CD4-positive, alpha-beta T cell (primary cell): ENCODE measurements at regions of chr10 and their contacts with region 1.

Region 1: GRCh38 chr10:12594448-12594944 is 245.1 kb downstream of the CAMK1D start:
- DNase-seq: peak in 12 of 14 experiments; percentile 7 to 82 (median 30)
- ATAC-seq: peak; percentile 80
- H3K4me3 ChIP-seq: no peak overlapping the region
- H3K4me3 Mint-ChIP-seq: peak overlapping the region; percentile 75
- H3K27ac ChIP-seq: peak overlapping the region; percentile 32
- H3K27ac Mint-ChIP-seq: peak overlapping the region; percentile 96
- H3K4me1 ChIP-seq: peaks cover 53% of the 10 kb centered on the region
- H3K4me1 Mint-ChIP-seq: peaks cover 96% of the 10 kb centered on the region
- H3K27me3 ChIP-seq: no peaks in the 10 kb centered on the region
- H3K27me3 Mint-ChIP-seq: no peaks in the 10 kb centered on the region
- CTCF ChIP-seq: no peak

Region 2: DNA sequence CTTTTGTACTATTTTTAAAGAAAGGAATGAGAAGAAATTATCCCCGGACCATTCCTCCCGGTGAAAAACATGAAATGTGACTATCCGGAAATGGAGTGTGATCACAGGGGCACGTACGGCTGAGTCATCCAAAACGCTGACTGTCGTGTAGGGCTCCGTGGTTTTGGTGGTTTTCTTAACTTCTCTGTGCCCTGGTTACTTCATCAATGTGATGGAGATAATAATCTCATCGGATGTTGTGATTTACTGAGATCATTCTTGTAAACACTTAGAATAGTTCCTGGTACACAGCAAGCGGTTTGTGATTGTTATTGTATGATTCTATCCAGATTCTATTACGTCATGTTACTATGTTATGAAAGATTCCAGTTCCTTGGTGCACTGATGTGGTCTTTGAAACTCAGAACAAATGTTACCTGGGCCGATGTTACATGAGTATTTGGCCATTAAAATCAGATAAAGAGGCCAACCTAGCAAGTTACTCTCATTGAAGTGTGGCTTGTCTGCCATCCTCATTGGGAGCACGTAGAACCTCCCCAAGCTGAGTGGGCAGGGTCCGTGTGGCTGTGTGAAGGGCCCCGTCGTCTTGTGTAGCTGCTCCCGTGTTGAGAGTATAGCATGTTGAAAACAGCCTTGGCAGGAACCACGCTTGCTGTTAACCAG is 145.6 kb before region 1 on chr10:
- CTCF ChIA-PET with region 1: no interaction called
- POLR2A ChIA-PET with region 1: no interaction called
- intact Hi-C with region 1: loop called in 1 of 2 experiments (anchors 5 kb)
- DNase-seq: peak; percentile 53 to 96 (median 68)
- ATAC-seq: peak; percentile 87
- H3K4me3 ChIP-seq: peak overlapping the region; percentile 21
- H3K4me3 Mint-ChIP-seq: peak overlapping the region; percentile 72
- H3K27ac ChIP-seq: peak overlapping the region; percentile 58 to 72
- H3K27ac Mint-ChIP-seq: peak overlapping the region; percentile 88
- H3K4me1 ChIP-seq: peaks cover 18% of the 10 kb centered on the region
- H3K4me1 Mint-ChIP-seq: peaks cover 44% of the 10 kb centered on the region
- H3K27me3 ChIP-seq: no peaks in the 10 kb centered on the region
- H3K27me3 Mint-ChIP-seq: no peaks in the 10 kb centered on the region
- CTCF ChIP-seq: no peak

Region 3: GRCh38 chr10:12638103-12638502 is 43.6 kb after region 1 on chr10:
- CTCF ChIA-PET with region 1: no interaction called
- POLR2A ChIA-PET with region 1: no interaction called
- intact Hi-C with region 1: loop called in 1 of 2 experiments (anchors 5 kb)
- DNase-seq: no peak
- ATAC-seq: no peak
- H3K4me3 ChIP-seq: no peak overlapping the region
- H3K4me3 Mint-ChIP-seq: no peak overlapping the region
- H3K27ac ChIP-seq: no peak overlapping the region
- H3K27ac Mint-ChIP-seq: peak overlapping the region; percentile 93
- H3K4me1 ChIP-seq: peaks cover 17% of the 10 kb centered on the region
- H3K4me1 Mint-ChIP-seq: peaks cover 52% of the 10 kb centered on the region
- H3K27me3 ChIP-seq: no peaks in the 10 kb centered on the region
- H3K27me3 Mint-ChIP-seq: no peaks in the 10 kb centered on the region
- CTCF ChIP-seq: no peak

Region 4: DNA sequence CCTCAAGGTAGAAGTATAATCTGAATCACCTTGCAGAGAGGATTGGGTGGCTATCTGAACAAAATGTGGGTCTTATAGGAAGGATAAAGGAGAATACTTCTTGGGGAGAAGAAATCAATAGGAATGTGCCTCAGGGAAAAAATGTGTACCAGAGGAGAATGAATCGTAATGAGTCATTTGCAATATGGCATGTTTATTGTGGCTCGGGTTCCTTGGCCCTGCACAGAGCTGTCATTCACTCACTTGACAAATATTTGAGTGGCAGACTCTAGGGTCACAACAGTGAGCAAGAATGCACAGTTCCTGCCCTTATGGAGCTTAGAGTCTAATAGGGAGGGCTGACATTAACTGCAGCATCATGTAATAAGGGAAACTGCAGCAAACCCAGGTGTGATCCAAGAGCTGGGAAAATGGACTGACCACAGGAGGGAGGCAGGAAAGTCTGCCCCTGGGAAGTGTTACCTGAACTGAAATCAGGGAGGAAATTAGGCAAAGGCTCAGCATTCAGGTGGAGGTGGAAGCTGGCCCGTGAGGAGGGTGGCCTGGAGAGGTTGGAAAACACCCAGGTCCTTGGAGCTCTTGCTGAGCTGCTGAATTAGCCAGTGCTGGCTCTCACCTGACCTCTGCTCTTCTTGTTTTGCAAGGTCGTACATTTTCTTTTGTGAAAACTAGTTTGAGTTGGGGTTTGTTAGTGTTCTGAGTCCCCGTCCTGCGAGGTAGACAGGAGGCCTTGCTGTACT is 1532.4 kb after region 1 on chr10:
- CTCF ChIA-PET with region 1: no interaction called
- POLR2A ChIA-PET with region 1: no interaction called
- intact Hi-C with region 1: no loop called
- DNase-seq: no peak
- ATAC-seq: no peak
- H3K4me3 ChIP-seq: no peak overlapping the region
- H3K4me3 Mint-ChIP-seq: no peak overlapping the region
- H3K27ac ChIP-seq: no peak overlapping the region
- H3K27ac Mint-ChIP-seq: no peak overlapping the region
- H3K4me1 ChIP-seq: no peaks in the 10 kb centered on the region
- H3K4me1 Mint-ChIP-seq: no peaks in the 10 kb centered on the region
- H3K27me3 ChIP-seq: no peaks in the 10 kb centered on the region
- H3K27me3 Mint-ChIP-seq: no peaks in the 10 kb centered on the region
- CTCF ChIP-seq: no peak